ENCODE measurements at regions of chr9 and their contacts with region 1.

Region 1: GRCh38 chr9:21252721-21253547 is 13.1 kb upstream of the IFNA14 start:
- DNase-seq: peak; percentile 39
- CTCF ChIP-seq: peak; percentile 53

Region 2: DNA sequence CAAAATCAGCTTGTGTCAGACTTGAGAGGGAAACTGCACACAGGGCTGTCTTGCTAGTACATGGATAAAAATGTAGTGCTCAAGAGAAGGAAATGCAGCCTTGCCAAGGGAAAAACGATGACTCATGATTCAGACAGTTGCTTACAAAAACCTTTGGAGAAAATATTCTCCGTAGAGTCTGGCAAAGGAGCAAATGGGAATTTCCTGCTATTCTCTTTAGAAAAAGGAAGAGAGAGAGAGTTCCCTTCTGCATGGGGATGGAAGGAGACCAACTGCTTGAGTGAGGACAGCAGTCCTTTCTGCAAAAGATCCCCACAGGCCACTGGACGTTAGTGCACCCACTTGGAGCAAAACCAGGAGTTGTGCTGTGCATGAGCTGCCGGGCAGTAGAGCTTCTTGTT is 182.8 kb before region 1 on chr9:
- CTCF ChIA-PET with region 1: no interaction called
- POLR2A ChIA-PET with region 1: no interaction called
- DNase-seq: no peak
- CTCF ChIP-seq: no peak

Region 3: GRCh38 chr9:21205204-21205603 is 47.7 kb before region 1 on chr9:
- CTCF ChIA-PET with region 1: no interaction called
- POLR2A ChIA-PET with region 1: no interaction called
- DNase-seq: no peak
- CTCF ChIP-seq: no peak

Region 4: DNA sequence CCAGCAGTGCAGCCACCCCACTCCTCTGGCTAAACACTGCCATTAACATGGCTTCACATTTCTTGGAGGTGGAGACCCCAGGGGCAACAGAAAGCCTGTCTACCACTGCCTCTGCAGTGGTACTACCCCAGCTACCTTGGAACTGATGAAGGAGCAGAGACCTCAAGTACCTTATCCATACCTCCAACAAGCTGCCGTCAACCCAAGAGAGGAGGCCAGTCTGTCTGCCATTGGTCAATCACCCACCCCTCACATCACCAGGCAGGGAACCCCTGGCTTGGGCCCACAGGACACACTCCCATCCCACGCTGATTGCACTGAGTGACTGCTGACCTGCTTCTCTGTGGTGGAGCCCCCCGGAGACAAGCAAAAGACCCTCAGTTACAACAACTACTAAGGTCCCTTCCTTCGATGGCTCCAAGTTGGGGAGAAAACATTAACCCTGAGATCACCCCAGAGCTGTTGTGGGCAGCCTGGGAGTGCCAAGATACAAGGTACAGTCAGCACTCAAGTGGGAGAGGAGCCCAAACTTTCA is 18.7 kb before region 1 on chr9:
- CTCF ChIA-PET with region 1: interaction called, 27 read pairs
- POLR2A ChIA-PET with region 1: no interaction called
- DNase-seq: no peak
- CTCF ChIP-seq: no peak

Region 5: DNA sequence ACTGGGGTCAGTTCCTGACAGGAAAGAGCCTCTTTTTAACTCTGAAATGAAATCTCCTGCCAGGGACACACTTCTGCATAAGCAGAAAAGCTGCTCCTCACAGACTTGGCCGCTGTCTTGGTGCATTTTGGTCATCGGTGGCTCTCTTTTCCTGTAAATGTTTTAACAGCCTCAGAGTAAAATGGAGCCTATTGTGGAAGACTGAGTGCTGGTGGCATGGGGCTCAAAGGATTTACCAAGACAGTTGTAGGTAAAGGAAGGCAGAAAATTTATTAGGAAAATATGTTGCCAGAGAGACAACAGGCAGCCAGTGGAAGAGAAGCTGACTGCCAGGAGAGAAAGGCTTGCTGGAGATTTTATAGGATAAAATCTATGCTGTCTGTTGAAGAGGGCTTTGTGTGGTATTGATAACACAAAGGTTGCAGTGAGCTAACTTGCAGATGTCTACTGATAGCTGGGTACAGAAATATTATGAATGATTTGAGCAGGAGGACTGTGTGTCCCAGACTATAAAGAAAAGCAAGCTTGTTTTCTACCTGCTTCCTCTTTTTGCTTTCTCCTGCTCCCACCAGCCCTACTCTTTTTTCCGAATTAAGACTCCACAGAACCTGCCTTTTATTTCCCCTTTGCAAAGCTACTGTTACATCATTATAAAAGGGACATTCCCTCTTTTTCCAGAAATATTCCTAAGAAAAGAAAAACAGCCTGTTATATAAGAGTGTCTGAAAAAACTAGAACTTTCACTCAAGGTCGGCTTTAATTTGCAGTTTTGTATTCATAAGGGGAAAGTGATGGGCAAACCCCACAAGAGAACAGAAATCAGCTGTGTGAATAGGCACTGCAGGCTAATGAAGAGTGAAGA is 14.8 kb after region 1 on chr9:
- CTCF ChIA-PET with region 1: interaction called, 11 read pairs
- POLR2A ChIA-PET with region 1: no interaction called
- DNase-seq: peak; percentile 22
- CTCF ChIP-seq: no peak

Region 6: GRCh38 chr9:21317956-21318923 is 65.3 kb after region 1 on chr9:
- CTCF ChIA-PET with region 1: interaction called, 10 read pairs
- POLR2A ChIA-PET with region 1: no interaction called
- DNase-seq: peak; percentile 28
- CTCF ChIP-seq: peak; percentile 71

Region 7: DNA sequence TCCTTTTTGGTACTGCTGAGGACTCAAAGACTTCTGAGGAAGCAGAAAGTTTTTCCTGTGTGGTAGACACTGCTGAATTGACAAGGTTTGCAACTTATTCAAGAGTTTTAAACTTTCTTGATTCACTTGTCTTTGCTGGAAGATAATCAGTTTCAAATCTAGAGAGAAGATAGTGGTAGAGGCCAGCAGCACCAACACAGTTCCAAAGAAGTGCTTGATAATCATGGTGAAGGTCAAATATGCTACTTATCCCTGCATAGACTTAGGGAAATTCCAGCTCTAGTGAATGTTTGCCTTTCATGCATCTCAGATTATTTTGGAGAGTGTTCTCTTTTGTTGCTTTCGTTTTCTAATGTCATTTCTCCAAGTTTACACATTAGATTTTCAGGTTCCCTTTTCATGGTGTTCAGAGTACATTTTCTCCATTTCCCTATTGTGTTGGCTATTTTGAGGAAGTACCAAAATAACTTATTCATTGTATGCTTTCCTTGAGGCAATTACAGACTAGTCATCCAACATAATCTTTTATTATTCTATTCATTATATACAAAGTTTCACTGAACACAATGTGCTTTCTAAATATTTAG is 228.6 kb after region 1 on chr9:
- CTCF ChIA-PET with region 1: no interaction called
- POLR2A ChIA-PET with region 1: no interaction called
- DNase-seq: peak; percentile 9
- CTCF ChIP-seq: no peak

Measured in GM10248 (cell line).